Activated T-helper 1 cell treated with anti-CD3 and anti-CD28 coated beads, Interleukin-12 subunit alpha, Interleukin-12 subunit beta, Interleukin-2, Interleukin-4 antibody, amounts not matched to agents 30 ng/mL and 10 ng/mL and 1 ng/mL, durations not matched to agents 14 hours and 24 hours and 36 hours (primary cell): ENCODE measurements at regions of chr2 and their contacts with region 1.

Region 1: GRCh38 chr2:178450774-178451525 is at the starts of genes PJVK and PRKRA:
- DNase-seq: peak; percentile 97
- H3K4me3 Mint-ChIP-seq: peak within 1 kb of the TSS; percentile 91
- H3K27ac Mint-ChIP-seq: peak within 1 kb of the TSS; percentile 95
- H3K4me1 Mint-ChIP-seq: peaks cover 35% of the 10 kb centered on the region
- H3K27me3 Mint-ChIP-seq: peaks cover 3% of the 10 kb centered on the region
- total RNA-seq, gene PJVK: 1.1 and 2.5 TPM in 2 replicates
- total RNA-seq, gene PRKRA: 45.1 and 50.5 TPM in 2 replicates

Region 2: GRCh38 chr2:177906041-177906718 is 544.8 kb before region 1 on chr2:
- intact Hi-C with region 1: no loop called
- DNase-seq: peak; percentile 51
- H3K4me3 Mint-ChIP-seq: no peak overlapping the region
- H3K27ac Mint-ChIP-seq: no peak overlapping the region
- H3K4me1 Mint-ChIP-seq: no peaks in the 10 kb centered on the region
- H3K27me3 Mint-ChIP-seq: peaks cover 6% of the 10 kb centered on the region

Region 3: GRCh38 chr2:178193823-178194599 is 256.9 kb before region 1 on chr2 and contains the start of gene OSBPL6:
- intact Hi-C with region 1: loop called (anchors 1 kb)
- DNase-seq: peak; percentile 75
- H3K4me3 Mint-ChIP-seq: peak within 1 kb of the TSS; percentile 80
- H3K27ac Mint-ChIP-seq: no peak within 1 kb of the TSS
- H3K4me1 Mint-ChIP-seq: peaks cover 11% of the 10 kb centered on the region
- H3K27me3 Mint-ChIP-seq: peaks cover 57% of the 10 kb centered on the region
- total RNA-seq, gene OSBPL6: 1.5 and 1.9 TPM in 2 replicates

Region 4: GRCh38 chr2:178414266-178415247 is 36.4 kb before region 1 on chr2:
- intact Hi-C with region 1: loop called (anchors 1 kb)
- DNase-seq: peak; percentile 76
- H3K4me3 Mint-ChIP-seq: peak overlapping the region; percentile 87
- H3K27ac Mint-ChIP-seq: peak overlapping the region; percentile 97
- H3K4me1 Mint-ChIP-seq: peaks cover 70% of the 10 kb centered on the region
- H3K27me3 Mint-ChIP-seq: no peaks in the 10 kb centered on the region

Region 5: DNA sequence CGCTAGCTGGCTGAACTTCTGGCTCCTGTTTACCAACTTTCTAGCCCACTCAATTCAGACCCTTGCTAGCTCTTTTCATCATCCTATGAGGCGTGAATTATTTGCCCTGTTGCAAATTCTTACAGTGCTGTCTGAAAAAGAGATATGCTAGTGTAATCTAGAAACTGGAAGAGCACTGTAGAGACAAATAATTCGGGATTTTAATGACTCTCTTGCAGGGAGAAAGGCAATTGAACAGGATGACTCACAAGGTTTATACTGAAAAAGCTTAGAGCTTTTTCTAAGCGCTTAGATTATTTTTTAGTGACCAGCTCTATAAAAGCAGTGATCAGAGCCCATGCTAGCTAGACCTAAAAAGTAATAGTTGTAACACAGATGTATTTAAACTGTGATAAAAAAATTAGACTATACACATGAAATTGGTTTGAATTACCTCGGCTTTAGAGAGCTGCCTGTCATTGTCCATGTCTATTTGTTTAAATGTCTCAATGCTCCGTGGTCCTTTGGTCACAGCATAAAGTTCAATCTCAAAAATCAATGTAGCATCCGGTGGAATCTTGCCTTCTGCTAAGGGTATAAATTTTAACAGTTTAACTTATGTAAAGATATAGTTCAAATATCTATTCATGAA is 18.4 kb after region 1 on chr2:
- intact Hi-C with region 1: no loop called
- DNase-seq: no peak
- H3K4me3 Mint-ChIP-seq: no peak overlapping the region
- H3K27ac Mint-ChIP-seq: no peak overlapping the region
- H3K4me1 Mint-ChIP-seq: no peaks in the 10 kb centered on the region
- H3K27me3 Mint-ChIP-seq: no peaks in the 10 kb centered on the region

Region 6: DNA sequence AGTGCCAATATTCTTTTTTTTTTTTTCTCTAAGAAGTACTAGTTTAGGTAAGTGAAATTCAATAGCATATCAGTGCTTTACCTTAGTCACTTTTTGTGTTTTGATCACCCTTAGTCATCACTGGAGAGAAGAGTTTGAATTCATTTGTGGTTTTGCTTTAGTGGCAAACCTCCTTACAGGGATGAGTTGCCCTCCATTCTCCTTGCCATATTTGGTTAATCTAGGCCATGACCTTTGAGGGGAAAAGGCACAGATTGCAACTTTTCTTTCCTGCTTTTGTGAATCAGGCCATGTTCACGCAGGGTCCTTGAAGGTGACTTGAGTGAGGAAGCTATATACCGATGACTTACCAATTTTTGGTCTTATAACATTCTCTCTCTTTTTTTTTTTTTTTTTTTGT is 63.7 kb after region 1 on chr2:
- intact Hi-C with region 1: loop called (anchors 2 kb)
- DNase-seq: peak; percentile 17
- H3K4me3 Mint-ChIP-seq: peak overlapping the region; percentile 30
- H3K27ac Mint-ChIP-seq: peak overlapping the region; percentile 82
- H3K4me1 Mint-ChIP-seq: peaks cover 27% of the 10 kb centered on the region
- H3K27me3 Mint-ChIP-seq: no peaks in the 10 kb centered on the region

Region 7: DNA sequence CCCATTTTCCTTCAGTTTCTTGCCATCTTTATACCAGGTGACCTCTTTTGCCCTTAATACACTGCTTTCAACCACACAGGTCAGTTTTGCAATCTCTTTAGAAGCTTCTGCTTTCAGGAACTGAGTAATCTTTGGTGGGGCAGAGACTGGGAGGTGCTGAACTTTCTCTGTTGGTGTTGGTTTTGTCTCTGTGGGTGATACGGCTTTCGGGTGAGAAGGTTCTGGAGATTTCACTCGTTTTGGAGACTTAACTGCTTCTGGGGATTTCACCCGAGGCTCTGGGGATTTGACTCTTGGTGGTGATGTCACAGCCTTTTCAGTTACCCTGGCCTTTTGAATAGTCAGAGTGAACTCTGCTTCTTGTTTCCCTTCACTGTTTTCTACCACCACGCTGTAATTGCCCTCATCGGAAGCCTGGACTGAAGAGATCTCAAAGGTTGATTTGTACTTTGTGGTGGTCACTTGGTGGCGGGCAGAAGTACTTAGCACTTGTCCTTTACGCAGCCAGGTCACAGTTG is 79.7 kb after region 1 on chr2:
- intact Hi-C with region 1: loop called (anchors 1 kb)
- DNase-seq: peak; percentile 44
- H3K4me3 Mint-ChIP-seq: peak overlapping the region; percentile 1
- H3K27ac Mint-ChIP-seq: peak overlapping the region; percentile 60
- H3K4me1 Mint-ChIP-seq: peaks cover 43% of the 10 kb centered on the region
- H3K27me3 Mint-ChIP-seq: no peaks in the 10 kb centered on the region

Region 8: GRCh38 chr2:178962805-178963433 is 512.0 kb after region 1 on chr2:
- intact Hi-C with region 1: no loop called
- DNase-seq: no peak
- H3K4me3 Mint-ChIP-seq: no peak overlapping the region
- H3K27ac Mint-ChIP-seq: no peak overlapping the region
- H3K4me1 Mint-ChIP-seq: no peaks in the 10 kb centered on the region
- H3K27me3 Mint-ChIP-seq: no peaks in the 10 kb centered on the region